ENCODE measurements at regions of chr1 and their contacts with region 1.

Region 1: DNA sequence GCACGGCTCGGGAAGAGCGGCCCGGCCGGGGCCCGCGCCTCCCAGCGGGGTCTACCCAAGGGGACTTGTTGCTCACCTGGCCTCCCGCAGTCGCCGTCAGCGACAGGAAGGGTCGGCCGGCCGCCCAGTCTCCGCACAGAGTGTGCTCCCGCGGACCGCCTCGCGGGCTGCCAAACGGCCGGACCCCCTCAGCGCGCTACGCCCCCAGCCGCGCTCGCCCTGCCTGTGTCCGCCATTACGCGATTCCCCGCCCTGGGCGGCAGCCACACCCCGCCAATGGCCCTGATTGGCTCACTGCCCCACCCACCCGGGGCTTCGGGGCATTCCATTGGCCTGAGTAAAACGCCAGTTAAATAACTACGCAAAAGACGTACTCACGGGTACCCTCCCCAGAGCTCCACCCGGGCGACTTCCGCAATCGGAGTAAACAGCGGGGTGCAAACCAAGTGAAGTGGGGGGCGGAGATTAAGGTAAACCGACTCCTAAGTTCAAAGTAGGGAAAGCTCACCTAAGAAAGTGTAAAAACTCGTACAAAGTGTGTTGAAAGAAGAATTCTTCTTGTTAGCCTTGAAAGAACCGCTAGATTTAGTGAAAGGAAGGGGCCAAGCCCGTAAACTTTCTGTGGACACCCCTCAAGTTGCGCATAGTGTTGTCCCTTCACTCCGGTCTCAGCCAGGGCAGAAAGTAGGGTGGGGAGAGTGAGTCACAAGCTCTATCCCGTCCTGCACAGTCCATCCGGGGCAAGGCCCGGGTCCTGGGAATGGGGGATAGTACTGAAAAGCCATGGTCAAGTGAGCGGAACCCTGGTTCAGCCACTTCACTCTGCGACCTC is at the start of gene WASF2:
- DNase-seq: peak; percentile 97 to 99 (median 99)
- ATAC-seq: peak; percentile 97
- H3K4me3 ChIP-seq: peak within 1 kb of the TSS; percentile 64
- H3K27ac ChIP-seq: peak within 1 kb of the TSS; percentile 98
- H3K4me1 ChIP-seq: peaks cover 6% of the 10 kb centered on the region
- H3K27me3 ChIP-seq: no peaks in the 10 kb centered on the region
- total RNA-seq, gene WASF2: 64.4 to 77.9 (median 71.5) TPM

Region 2: DNA sequence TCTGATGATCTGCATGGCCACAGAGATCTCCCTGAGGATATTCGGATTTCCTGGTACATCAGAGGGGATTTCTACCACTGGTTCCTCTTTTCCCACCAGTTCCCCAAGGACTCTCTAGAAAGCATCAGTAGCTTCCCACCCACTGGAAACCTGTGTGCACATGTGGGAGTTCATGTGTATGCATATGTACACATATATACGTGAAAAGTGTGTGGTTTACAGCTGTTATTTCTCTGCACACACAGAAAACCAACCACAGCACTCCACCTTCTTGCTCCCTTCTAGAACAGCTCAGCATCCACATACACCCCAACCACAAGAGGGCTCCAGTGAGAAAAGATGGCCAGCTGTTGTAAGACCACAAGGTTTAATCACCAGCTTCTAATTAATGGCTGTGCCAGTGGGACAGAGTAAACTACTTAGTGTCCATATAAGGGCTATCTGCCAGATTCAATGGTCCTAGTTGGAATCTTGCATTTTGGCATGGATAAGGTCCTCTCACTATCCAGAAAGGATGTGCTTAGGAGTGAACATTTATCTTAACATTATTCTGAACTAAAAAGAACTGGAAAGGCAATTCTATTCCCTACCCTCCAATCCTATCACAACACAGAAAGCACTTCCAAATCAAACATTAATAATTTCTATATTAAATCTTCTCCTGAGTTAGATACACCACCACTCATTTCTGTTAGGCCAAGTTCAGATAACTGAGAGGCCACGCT is 73.6 kb before region 1 on chr1:
- intact Hi-C with region 1: loop called in 1 of 4 experiments (anchors 5 kb)
- DNase-seq: no peak
- ATAC-seq: peak in 1 of 2 donors; percentile 36
- H3K4me3 ChIP-seq: no peak overlapping the region
- H3K27ac ChIP-seq: peak overlapping the region; percentile 32
- H3K4me1 ChIP-seq: peaks cover 12% of the 10 kb centered on the region
- H3K27me3 ChIP-seq: no peaks in the 10 kb centered on the region